SK-N-SH (cell line): ENCODE measurements at regions of chrX and their contacts with region 1.

Region 1: GRCh38 chrX:101390664-101391525 is at the start of gene RPL36A:
- DNase-seq: peak; percentile 83
- H3K4me3 ChIP-seq: peak within 1 kb of the TSS; percentile 70 to 78
- H3K27ac ChIP-seq: peak within 1 kb of the TSS; percentile 65 to 85
- H3K4me1 ChIP-seq: peaks cover 8 to 10% of the 10 kb centered on the region in 2 experiments; a peak in 3 of 4 replicates
- H3K27me3 ChIP-seq: peaks cover 3% of the 10 kb centered on the region; the same call in 1 of the 2 replicates
- CTCF ChIP-seq: peak; percentile 89
- EP300 ChIP-seq: peak in 1 of 2 experiments; percentile 14; a peak in 1 of 4 replicates
- RAD21 ChIP-seq: no peak; the same call in 1 of the 2 replicates
- polyA plus RNA-seq, gene RPL36A: 3,417 and 5,140 TPM in 2 replicates

Region 2: GRCh38 chrX:101348452-101349192 is 42.3 kb before region 1 on chrX and contains the start of gene TIMM8A:
- CTCF ChIA-PET with region 1: interaction called, 12 read pairs
- POLR2A ChIA-PET with region 1: interaction called, 15 read pairs
- DNase-seq: peak; percentile 84
- H3K4me3 ChIP-seq: peak within 1 kb of the TSS; percentile 60 to 82
- H3K27ac ChIP-seq: peak within 1 kb of the TSS; percentile 71 to 81
- H3K4me1 ChIP-seq: no peaks in the 10 kb centered on the region
- H3K27me3 ChIP-seq: peaks cover 12% of the 10 kb centered on the region; the same call in 1 of the 2 replicates
- CTCF ChIP-seq: no peak
- EP300 ChIP-seq: no peak
- RAD21 ChIP-seq: no peak
- polyA plus RNA-seq, gene TIMM8A: 14.2 and 15.8 TPM in 2 replicates

Region 3: DNA sequence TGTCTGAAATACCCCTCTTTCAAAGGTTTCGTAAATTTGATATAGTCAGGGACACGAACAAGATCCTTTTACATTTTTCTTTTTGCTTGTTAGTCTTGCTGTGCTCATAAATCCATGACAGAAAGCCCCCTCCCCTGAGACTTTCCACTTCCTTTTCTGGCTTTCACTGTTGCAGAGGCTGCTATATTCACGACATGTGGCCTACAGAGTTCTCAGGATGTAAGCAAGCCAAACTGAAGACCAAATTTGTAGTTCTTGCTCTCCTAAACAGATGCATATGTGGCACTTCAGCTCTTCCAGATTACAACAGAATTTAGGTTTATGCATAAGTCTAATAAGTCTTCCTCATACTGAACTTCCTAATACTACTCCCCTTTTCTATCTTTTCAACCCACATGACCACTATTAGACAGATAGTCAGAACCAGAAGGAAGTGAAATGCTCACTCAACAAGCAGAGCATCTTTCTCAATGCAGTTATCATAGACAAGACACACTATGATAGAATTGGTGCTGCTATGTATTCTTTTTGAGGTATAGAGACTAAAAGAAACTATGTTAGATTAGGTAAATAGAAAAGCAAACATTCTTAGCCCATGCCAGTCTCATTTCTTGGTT is 19.9 kb before region 1 on chrX:
- CTCF ChIA-PET with region 1: interaction called, 3 read pairs
- POLR2A ChIA-PET with region 1: interaction called, 10 read pairs
- DNase-seq: no peak
- H3K4me3 ChIP-seq: no peak overlapping the region
- H3K27ac ChIP-seq: no peak overlapping the region
- H3K4me1 ChIP-seq: no peaks in the 10 kb centered on the region
- H3K27me3 ChIP-seq: peaks cover 7% of the 10 kb centered on the region; the same call in 1 of the 2 replicates
- CTCF ChIP-seq: no peak
- EP300 ChIP-seq: no peak
- RAD21 ChIP-seq: no peak

Region 4: GRCh38 chrX:101377547-101377946 is 13.3 kb before region 1 on chrX:
- CTCF ChIA-PET with region 1: interaction called, 18 read pairs
- POLR2A ChIA-PET with region 1: interaction called, 10 read pairs
- DNase-seq: no peak
- H3K4me3 ChIP-seq: no peak overlapping the region
- H3K27ac ChIP-seq: no peak overlapping the region
- H3K4me1 ChIP-seq: no peaks in the 10 kb centered on the region; a peak in 1 of 4 replicates
- H3K27me3 ChIP-seq: peaks cover 7% of the 10 kb centered on the region; the same call in 1 of the 2 replicates
- CTCF ChIP-seq: no peak
- EP300 ChIP-seq: no peak
- RAD21 ChIP-seq: no peak

Region 5: DNA sequence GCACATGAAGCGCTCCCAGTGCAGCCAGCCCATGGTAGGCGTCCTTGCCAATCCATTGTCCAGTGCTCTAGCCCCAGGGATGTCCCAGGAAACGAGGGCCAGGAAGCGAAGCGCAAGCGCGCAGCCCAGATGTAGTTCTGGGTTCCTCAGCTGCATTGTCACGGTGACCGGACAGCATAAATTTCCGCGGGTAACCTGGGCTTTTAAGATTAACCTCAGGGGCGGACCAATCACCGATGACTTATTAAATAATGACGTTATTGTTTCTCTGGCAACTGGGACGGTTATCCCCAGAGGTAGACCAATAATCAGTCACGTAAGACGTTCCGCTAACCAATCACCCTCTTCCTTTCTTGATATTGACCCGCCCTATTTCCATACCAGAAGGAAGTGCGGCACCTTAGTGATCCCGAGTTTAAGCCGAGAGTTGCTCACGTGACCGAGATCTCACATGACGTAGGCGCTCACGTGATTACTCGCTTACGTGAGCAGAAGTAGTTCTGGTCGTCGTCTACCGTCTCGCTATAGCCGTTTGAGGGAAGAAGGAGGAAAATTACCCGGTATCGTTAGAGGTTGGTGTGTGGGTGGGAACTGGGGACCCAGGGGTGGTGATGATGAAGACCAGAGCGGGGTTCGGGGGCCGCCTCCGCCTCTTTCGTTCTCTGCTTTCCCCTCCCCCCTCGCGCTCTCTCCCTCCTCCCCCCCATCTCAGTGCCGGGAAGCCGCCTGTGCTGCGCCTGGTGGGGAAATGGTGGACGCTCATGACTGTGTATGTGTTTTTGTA is 17.0 kb after region 1 on chrX and contains the starts of genes GLA and HNRNPH2:
- CTCF ChIA-PET with region 1: interaction called, 17 read pairs
- POLR2A ChIA-PET with region 1: interaction called, 10 read pairs
- DNase-seq: peak; percentile 86
- H3K4me3 ChIP-seq: peak within 1 kb of the TSS; percentile 83 to 88
- H3K27ac ChIP-seq: peak within 1 kb of the TSS; percentile 86 to 90
- H3K4me1 ChIP-seq: peaks cover 0 to 12% of the 10 kb centered on the region in 2 experiments; a peak in 2 of 4 replicates
- H3K27me3 ChIP-seq: no peaks in the 10 kb centered on the region
- CTCF ChIP-seq: 0 out of 2 replicates have a peak, but pooled peaks have one; percentile 30
- EP300 ChIP-seq: peak in 1 of 2 experiments; percentile 1; a peak in 1 of 4 replicates
- RAD21 ChIP-seq: no peak
- polyA plus RNA-seq, gene GLA: 20.4 and 29.5 TPM in 2 replicates
- polyA plus RNA-seq, gene HNRNPH2: 32.5 and 44.9 TPM in 2 replicates

Region 6: DNA sequence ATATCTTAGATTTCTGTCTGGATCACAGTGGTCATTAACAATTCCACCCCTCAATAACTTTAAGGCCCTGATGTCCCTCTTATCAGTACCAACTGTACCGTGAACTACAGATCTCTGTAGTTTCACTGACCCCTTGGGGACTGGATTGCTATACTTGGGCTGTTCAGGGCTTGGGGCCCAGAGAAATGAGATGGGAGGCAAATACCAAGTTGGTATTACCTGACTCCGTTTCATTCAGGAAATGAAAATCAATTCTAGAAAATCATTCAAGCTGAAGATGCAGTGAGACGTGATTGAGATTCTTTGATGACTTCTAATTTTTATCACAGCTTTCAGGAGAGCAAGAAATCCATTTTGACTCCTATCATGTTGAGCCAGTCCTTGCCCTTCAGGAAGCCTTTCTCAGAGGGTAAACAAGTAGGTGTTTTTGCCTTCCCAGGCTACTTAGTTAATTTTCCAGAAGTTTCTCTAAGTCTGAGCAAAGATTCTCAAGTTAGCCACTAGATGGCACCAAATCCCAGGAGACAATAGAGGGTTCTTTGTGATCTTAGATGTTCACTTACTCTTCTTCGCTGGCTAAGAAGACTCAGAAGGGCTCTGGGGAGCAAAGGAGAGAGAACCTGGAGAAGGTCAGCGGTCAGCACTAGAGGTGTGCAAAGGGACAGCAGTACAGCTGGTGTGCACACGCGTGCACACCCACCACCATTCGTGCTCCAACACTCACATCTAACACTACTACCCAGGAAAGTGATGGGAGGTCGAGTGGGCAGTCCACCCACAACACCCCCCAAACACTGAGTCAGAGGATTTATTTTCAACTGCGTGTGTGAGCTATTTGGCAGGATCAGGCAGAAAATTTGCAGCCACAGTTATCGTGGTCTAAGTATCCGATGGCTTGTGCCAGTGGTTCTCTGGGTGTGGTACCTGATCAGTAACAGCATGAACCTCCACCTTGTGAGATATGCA is 24.6 kb after region 1 on chrX:
- CTCF ChIA-PET with region 1: interaction called, 7 read pairs
- POLR2A ChIA-PET with region 1: interaction called, 15 read pairs
- DNase-seq: peak; percentile 58
- H3K4me3 ChIP-seq: no peak overlapping the region
- H3K27ac ChIP-seq: peak overlapping the region; percentile 25 to 47; a peak in 3 of 4 replicates
- H3K4me1 ChIP-seq: peaks cover 0 to 6% of the 10 kb centered on the region in 2 experiments; a peak in 2 of 4 replicates
- H3K27me3 ChIP-seq: no peaks in the 10 kb centered on the region
- CTCF ChIP-seq: peak; percentile 84
- EP300 ChIP-seq: no peak
- RAD21 ChIP-seq: peak; percentile 83